ENCODE measurements at regions of chr11 and their contacts with region 1.

Region 1: DNA sequence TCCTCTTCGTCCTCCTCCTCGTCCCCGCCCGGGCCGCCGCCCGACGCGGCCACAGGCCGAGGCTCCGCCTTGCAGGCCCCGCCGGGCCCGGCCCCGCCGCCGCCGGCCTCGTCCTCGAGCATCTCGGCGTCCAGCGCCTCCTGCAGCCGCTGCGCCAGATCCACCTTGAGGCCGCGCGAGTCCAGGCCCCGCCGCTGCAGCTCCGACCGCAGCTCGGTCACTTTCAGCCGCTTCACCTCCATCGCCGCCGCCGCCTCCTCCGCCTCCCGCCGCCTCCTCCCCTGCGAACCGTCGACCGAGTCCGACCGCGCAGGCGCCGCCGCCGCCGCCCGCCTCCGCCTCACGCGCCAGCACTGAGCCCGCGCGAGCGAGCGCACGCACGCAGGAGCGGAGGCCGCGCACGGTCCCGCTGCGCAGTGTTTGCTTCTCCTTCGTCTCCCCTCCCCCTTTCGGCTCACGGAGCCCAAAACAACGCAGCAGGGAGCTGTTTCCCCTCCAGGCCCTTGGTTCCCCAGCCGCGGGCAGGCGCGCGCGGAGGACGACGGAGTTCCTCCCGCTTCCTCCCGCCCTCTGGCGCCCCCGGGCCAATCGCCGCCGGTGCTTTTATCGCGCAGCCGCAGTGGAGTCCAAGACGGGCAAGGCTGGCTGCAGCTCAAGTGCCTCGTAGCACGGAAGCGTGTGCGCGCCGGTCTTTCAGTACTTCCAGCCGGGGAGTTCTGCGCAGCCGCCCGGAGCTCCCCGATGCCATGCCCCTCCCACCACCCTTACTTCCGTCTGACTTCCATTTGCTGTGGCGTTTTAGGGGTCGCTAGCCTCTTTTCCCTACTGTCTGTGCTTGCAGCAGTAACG is at the start of gene HNRNPUL2:
- DNase-seq: peak; percentile 98 to 99
- ATAC-seq: peak; percentile 93 to 97 (median 94)
- H3K4me3 ChIP-seq: peak within 1 kb of the TSS; percentile 63 to 98 (median 89)
- H3K27ac ChIP-seq: peak within 1 kb of the TSS; percentile 87 to 99 (median 93)
- H3K4me1 ChIP-seq: peaks cover 12 to 69% (median 49%) of the 10 kb centered on the region in 9 donors
- H3K27me3 ChIP-seq: no peaks in the 10 kb centered on the region
- CTCF ChIP-seq: peak in 3 of 9 donors; percentile 16 to 32 (median 19)
- total RNA-seq, gene HNRNPUL2: 26.9 to 40.9 (median 33.4) TPM

Region 2: GRCh38 chr11:62665075-62665598 is 62.0 kb before region 1 on chr11 and contains the starts of genes C11orf98 and CSKMT:
- intact Hi-C with region 1: no loop called
- DNase-seq: peak; percentile 94 to 95
- ATAC-seq: peak; percentile 96 to 99 (median 98)
- H3K4me3 ChIP-seq: peak within 1 kb of the TSS; percentile 59 to 95 (median 80)
- H3K27ac ChIP-seq: peak within 1 kb of the TSS; percentile 80 to 94 (median 91)
- H3K4me1 ChIP-seq: peaks cover 16 to 49% (median 37%) of the 10 kb centered on the region in 9 donors
- H3K27me3 ChIP-seq: no peaks in the 10 kb centered on the region
- CTCF ChIP-seq: no peak
- total RNA-seq, gene C11orf98: 25.8 to 41.5 (median 30.0) TPM
- total RNA-seq, gene CSKMT: 2.4 to 7.7 (median 4.2) TPM

Region 3: DNA sequence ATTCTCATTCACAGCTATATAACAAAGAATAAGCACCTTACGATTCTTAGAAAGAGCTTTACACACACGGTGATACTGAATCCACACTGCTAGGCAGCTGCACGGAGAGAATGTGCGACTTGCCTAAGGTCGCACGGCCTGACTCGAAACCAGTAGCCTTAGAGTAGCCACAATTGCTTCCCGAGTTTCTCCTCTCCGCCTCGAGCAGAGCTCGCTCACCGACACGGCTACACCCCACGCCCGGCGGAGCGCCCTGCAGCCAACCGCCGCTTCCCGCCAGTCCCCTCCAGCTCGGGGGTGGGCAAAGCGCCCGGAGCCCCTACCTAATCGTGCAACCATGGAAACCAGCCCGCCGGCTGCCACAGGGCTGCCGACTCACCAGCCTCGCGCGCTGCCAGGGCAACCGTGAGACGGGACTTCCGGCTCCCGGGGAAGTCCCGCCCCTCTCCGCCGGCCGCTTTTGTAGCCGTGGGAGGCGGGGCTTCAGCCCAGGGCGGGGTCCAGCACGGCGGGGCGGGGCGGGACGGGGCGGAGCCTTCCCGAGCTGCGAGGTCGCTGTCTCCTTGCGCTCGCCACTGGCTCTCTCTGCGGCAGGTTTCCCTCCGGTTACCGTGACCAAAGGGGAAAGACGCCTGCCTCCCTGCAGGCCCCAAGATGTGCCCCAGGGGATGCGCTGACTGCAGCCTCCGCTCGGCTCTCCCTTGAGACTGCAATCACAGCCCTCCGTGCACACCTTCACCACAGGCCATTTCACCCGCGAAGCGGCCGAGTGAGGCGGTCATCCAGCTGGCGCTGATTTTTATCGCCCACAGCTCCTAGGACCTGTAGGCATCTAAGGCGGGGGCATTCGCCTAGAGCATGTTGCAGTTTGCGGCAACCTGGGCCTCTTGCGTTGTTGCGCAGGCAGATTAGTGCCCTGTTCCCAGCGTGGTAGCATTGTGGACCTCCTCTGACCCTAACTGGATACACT is 21.0 kb before region 1 on chr11:
- intact Hi-C with region 1: loop called in 1 of 10 experiments (anchors 2 kb)
- DNase-seq: peak; percentile 93 to 96
- ATAC-seq: peak; percentile 85 to 90 (median 88)
- H3K4me3 ChIP-seq: peak overlapping the region; percentile 42 to 90 (median 72)
- H3K27ac ChIP-seq: peak overlapping the region; percentile 63 to 91 (median 81)
- H3K4me1 ChIP-seq: peaks cover 23 to 61% (median 40%) of the 10 kb centered on the region in 9 donors
- H3K27me3 ChIP-seq: no peaks in the 10 kb centered on the region
- CTCF ChIP-seq: no peak

Region 4: DNA sequence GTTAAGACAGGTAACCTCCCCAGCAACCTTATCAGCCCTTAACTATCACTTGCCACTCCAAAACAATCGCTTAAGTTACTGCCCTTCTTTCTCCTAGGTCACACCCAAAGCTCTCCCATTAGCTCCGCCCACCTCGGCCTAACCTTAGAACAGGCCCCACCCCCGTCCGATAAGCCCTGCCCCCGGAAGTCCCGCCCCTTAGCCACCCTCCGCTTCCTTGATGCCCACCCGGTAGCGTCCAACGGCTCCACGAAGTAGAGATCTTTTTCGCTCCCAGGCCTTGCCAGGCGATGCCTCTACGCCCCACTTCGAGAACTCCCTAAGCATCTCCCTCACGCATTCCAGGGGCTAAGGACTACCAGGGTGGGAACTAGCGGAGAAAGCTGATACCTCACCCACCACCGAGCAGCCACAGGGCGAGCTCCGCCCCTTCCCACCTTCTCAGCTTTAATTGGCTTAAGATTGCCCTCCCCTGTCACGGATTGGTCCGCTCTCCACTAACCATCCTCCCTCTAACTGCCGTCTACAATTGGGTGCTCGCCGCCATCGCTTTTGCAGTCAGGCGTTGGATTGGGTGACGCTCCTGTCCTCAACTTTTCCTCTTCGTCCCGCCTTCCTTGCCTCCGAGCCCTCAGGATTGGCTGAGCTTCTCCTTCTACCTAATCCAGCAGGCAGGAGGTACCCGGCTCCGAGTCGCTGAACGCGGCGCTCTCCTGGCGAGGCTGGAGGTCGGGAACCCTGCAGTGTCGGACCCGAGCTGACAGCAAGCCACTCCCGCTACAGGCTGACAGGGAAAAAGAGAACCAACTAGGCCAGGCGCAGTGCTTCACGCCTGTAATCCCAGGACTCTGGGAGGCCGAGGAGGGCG is 26.8 kb after region 1 on chr11 and contains the start of gene ZBTB3:
- intact Hi-C with region 1: loop called in 2 of 10 experiments (anchors 2 kb)
- DNase-seq: peak; percentile 95 to 99
- ATAC-seq: peak; percentile 97 to 99 (median 98)
- H3K4me3 ChIP-seq: peak within 1 kb of the TSS; percentile 36 to 72 (median 62)
- H3K27ac ChIP-seq: peak within 1 kb of the TSS; percentile 81 to 95 (median 91)
- H3K4me1 ChIP-seq: peaks cover 7 to 42% (median 25%) of the 10 kb centered on the region in 9 donors
- H3K27me3 ChIP-seq: no peaks in the 10 kb centered on the region
- CTCF ChIP-seq: no peak
- total RNA-seq, gene ZBTB3: 7.5 to 14.9 (median 9.6) TPM

Region 5: GRCh38 chr11:62771144-62772021 is 44.2 kb after region 1 on chr11 and contains the start of gene TAF6L:
- intact Hi-C with region 1: loop called in 2 of 10 experiments (anchors 5 kb)
- DNase-seq: peak; percentile 98 to 99
- ATAC-seq: peak; percentile 97 to 99 (median 98)
- H3K4me3 ChIP-seq: peak within 1 kb of the TSS; percentile 42 to 88 (median 72)
- H3K27ac ChIP-seq: peak within 1 kb of the TSS; percentile 64 to 97 (median 94)
- H3K4me1 ChIP-seq: peaks cover 10 to 30% (median 21%) of the 10 kb centered on the region in 9 donors
- H3K27me3 ChIP-seq: no peaks in the 10 kb centered on the region
- CTCF ChIP-seq: no peak
- total RNA-seq, gene TAF6L: 7.7 to 14.7 (median 9.0) TPM

Region 6: DNA sequence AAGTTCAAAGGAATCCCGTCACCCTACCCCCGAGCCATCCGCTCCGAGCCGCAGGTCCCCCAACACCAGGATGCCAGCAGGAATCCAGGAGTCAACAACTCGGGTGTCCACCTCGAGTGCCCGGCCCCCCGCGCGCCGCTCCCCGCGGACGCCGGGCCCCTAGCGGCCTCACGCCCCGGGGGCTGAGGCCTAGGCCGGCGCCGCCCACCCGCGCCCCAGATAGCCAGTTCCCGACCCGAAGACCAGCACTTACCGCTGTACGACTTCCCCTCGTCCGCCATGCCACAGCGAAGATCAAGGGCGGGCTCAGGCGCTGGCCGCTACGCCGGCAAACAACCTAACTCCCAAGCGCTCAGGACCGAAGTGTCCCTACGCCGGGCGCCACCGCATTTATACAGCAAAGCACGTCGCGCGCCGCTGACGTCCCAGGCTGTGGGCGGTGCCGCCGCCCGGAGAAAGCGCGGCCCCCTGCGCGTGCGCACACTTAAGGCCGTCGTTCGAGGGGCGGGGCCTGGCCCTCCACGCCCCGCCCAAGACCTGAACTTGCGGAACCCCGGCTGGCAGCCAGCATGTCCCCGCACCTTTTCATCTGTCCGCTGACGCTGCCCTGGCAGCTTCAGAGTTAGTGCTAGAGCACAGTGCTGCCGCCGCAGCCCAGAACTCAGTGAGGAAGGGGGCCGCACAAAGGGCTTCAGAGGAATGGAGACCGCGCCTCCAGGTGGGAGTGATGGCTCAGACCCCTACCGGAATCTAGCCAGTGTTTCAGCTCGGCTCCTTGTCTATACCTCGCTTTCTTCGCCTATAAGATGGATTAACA is 78.1 kb after region 1 on chr11 and contains the start of gene NXF1:
- intact Hi-C with region 1: loop called in 1 of 10 experiments (anchors 5 kb)
- DNase-seq: peak; percentile 94 to 96
- ATAC-seq: peak; percentile 92 to 97 (median 96)
- H3K4me3 ChIP-seq: peak within 1 kb of the TSS; percentile 36 to 88 (median 82)
- H3K27ac ChIP-seq: peak within 1 kb of the TSS; percentile 61 to 95 (median 90)
- H3K4me1 ChIP-seq: peaks cover 14 to 47% (median 31%) of the 10 kb centered on the region in 9 donors
- H3K27me3 ChIP-seq: no peaks in the 10 kb centered on the region
- CTCF ChIP-seq: peak in 2 of 9 donors; percentile 12 to 25
- total RNA-seq, gene NXF1: 28.3 to 58.7 (median 36.7) TPM

Measured in heart right ventricle (tissue), 16 donors.